MCF 10A (cell line): ENCODE measurements at regions of chr13 and their contacts with region 1.

Region 1: GRCh38 chr13:24995226-24995804 is 100.6 kb upstream of the PABPC3 start:
- DNase-seq: peak; percentile 88
- H3K4me3 Mint-ChIP-seq: no peak overlapping the region
- H3K27ac Mint-ChIP-seq: no peak overlapping the region
- H3K4me1 Mint-ChIP-seq: peaks cover 5% of the 10 kb centered on the region
- H3K27me3 Mint-ChIP-seq: no peaks in the 10 kb centered on the region
- CTCF ChIP-seq: peak; percentile 71

Region 2: GRCh38 chr13:24683838-24684599 is 311.3 kb before region 1 on chr13:
- CTCF ChIA-PET with region 1: interaction called, 10 read pairs
- POLR2A ChIA-PET with region 1: no interaction called
- intact Hi-C with region 1: no loop called
- DNase-seq: peak; percentile 62
- H3K4me3 Mint-ChIP-seq: no peak overlapping the region
- H3K27ac Mint-ChIP-seq: no peak overlapping the region
- H3K4me1 Mint-ChIP-seq: no peaks in the 10 kb centered on the region
- H3K27me3 Mint-ChIP-seq: peaks cover 11% of the 10 kb centered on the region
- CTCF ChIP-seq: peak; percentile 93

Region 3: DNA sequence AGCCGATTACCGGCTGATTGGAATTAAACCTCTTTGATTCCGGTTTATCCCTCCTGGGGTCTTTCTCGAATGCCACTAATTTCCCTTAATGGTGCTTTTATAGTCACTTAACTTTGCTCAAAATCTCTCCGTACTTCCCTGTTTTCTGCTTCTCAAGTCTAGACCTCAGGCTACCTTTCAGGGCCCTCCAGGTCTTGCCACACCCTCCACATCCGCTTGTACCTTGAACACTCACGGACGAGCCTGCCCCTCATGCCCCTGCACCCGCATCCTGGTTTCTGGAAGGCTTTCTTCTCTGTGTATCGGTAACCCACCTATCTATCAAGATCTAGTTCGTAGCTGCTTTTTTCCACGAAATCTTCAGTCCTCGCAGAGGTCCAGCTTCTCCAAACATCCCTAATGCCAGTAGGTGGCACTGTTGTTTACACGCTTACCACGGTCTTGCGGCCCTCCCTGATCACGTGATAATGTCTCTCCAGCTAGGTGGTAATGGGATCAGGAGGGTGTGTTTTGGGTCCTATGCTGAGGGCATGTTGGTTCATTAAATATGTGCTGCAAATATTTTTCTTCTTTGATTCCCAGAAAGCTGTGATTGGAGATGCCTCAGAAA is 301.3 kb before region 1 on chr13:
- CTCF ChIA-PET with region 1: interaction called, 36 read pairs
- POLR2A ChIA-PET with region 1: no interaction called
- intact Hi-C with region 1: loop called (anchors 1 kb)
- DNase-seq: peak; percentile 82
- H3K4me3 Mint-ChIP-seq: no peak overlapping the region
- H3K27ac Mint-ChIP-seq: no peak overlapping the region
- H3K4me1 Mint-ChIP-seq: peaks cover 5% of the 10 kb centered on the region
- H3K27me3 Mint-ChIP-seq: peaks cover 9% of the 10 kb centered on the region
- CTCF ChIP-seq: peak; percentile 66

Region 4: DNA sequence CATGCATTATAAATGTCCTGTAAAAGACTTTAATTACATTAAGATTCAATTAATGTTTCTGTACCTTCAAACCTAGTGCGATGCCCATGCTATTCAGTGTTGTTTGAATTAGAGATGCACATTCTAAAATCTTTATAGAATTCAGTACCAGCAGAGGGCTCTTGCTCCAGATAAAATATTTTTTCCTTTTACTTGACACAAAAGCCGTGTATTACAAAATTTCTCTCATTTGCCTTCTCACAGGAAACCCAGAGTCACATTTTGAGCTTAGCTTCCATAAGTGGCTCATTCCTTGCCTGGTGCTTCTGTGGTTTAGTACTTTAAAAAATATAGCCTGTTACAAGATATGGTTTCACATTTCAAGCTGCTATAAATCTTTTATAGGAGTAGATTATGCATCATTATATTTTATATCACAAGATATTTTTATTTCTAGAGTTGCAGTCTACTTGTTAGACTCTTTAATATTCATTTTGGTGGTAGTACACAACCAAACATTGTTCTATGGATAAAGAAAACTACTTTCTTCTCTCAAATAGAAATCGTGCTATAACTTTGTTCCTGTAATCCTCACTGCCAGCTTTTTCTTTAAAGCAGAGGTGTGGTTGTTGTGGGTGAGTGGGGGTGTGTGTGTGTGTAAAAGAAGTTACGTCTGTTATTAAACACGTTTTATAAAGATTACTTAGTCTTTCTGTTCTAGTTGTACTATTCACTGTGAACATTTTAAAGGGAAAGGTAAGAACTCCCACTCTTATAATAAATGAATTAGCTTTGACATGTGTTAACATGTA is 130.0 kb before region 1 on chr13:
- CTCF ChIA-PET with region 1: no interaction called
- POLR2A ChIA-PET with region 1: no interaction called
- intact Hi-C with region 1: loop called (anchors 10 kb)
- DNase-seq: peak; percentile 16
- H3K4me3 Mint-ChIP-seq: no peak overlapping the region
- H3K27ac Mint-ChIP-seq: no peak overlapping the region
- H3K4me1 Mint-ChIP-seq: peaks cover 16% of the 10 kb centered on the region
- H3K27me3 Mint-ChIP-seq: no peaks in the 10 kb centered on the region
- CTCF ChIP-seq: no peak

Region 5: GRCh38 chr13:24985109-24985508 is 10.2 kb before region 1 on chr13:
- CTCF ChIA-PET with region 1: interaction called, 17 read pairs
- POLR2A ChIA-PET with region 1: no interaction called
- intact Hi-C with region 1: no loop called
- DNase-seq: no peak
- H3K4me3 Mint-ChIP-seq: no peak overlapping the region
- H3K27ac Mint-ChIP-seq: no peak overlapping the region
- H3K4me1 Mint-ChIP-seq: peaks cover 17% of the 10 kb centered on the region
- H3K27me3 Mint-ChIP-seq: peaks cover 15% of the 10 kb centered on the region
- CTCF ChIP-seq: no peak

Region 6: GRCh38 chr13:25037057-25037813 is 41.9 kb after region 1 on chr13:
- CTCF ChIA-PET with region 1: interaction called, 14 read pairs
- POLR2A ChIA-PET with region 1: no interaction called
- intact Hi-C with region 1: no loop called
- DNase-seq: peak; percentile 79
- H3K4me3 Mint-ChIP-seq: no peak overlapping the region
- H3K27ac Mint-ChIP-seq: peak overlapping the region; percentile 16
- H3K4me1 Mint-ChIP-seq: peaks cover 5% of the 10 kb centered on the region
- H3K27me3 Mint-ChIP-seq: peaks cover 32% of the 10 kb centered on the region
- CTCF ChIP-seq: peak; percentile 72

Region 7: GRCh38 chr13:25114220-25114619 is 118.9 kb after region 1 on chr13:
- CTCF ChIA-PET with region 1: interaction called, 22 read pairs
- POLR2A ChIA-PET with region 1: no interaction called
- intact Hi-C with region 1: no loop called
- DNase-seq: peak; percentile 77
- H3K4me3 Mint-ChIP-seq: no peak overlapping the region
- H3K27ac Mint-ChIP-seq: no peak overlapping the region
- H3K4me1 Mint-ChIP-seq: peaks cover 6% of the 10 kb centered on the region
- H3K27me3 Mint-ChIP-seq: no peaks in the 10 kb centered on the region
- CTCF ChIP-seq: peak; percentile 71